ENCODE measurements at regions of chr7 and their contacts with region 1.

Region 1: DNA sequence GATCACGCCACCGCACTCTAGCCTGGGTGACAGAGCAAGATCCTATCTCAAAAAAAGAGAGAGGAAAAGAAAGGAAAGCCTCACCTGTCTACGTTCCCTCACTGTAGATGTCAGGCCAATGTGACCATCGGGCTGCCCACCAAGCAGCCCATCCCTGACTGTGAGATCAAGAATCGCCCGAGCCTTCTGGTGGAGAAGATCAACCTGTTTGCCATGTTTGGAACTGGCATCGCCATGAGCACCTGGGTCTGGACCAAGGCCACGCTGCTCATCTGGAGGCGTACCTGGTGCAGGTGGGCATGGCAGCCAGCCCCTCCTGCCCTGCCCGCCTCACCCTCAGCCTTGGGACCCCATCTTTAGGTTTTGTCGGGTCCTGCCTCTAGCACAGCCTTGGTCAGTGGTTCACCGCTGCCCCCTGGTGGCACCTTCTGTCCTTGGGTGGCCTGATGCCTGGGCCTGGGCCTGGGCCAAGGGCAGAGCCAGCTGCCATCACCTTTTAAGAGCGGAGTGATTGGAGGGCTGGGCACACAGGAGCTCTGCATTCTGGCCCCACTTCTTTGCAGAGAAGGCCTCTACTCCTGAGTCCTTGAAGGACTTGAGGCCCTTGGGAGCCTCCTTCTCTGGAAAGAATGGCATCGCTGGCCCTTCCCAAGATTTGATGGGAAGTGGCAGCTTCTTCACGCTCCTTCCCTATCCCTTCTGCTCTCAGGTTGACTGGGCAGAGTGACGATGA is 14.4 kb upstream of the AHCYL2 start:
- DNase-seq: peak; percentile 77
- ATAC-seq: peak; percentile 91
- H3K4me3 Mint-ChIP-seq: no peak overlapping the region
- H3K27ac Mint-ChIP-seq: no peak overlapping the region
- H3K4me1 Mint-ChIP-seq: peaks cover 5% of the 10 kb centered on the region
- H3K27me3 Mint-ChIP-seq: no peaks in the 10 kb centered on the region
- CTCF ChIP-seq: peak; percentile 66

Region 2: GRCh38 chr7:128904381-128905197 is 305.8 kb before region 1 on chr7:
- CTCF ChIA-PET with region 1: interaction called, 3 read pairs
- POLR2A ChIA-PET with region 1: no interaction called
- intact Hi-C with region 1: loop called (anchors 1 kb)
- DNase-seq: no peak
- ATAC-seq: peak; percentile 90
- H3K4me3 Mint-ChIP-seq: no peak overlapping the region
- H3K27ac Mint-ChIP-seq: no peak overlapping the region
- H3K4me1 Mint-ChIP-seq: peaks cover 8% of the 10 kb centered on the region
- H3K27me3 Mint-ChIP-seq: peaks cover 7% of the 10 kb centered on the region
- CTCF ChIP-seq: no peak

Region 3: GRCh38 chr7:129163875-129164544 is 46.4 kb before region 1 on chr7:
- CTCF ChIA-PET with region 1: interaction called, 27 read pairs
- POLR2A ChIA-PET with region 1: interaction called, 4 read pairs
- intact Hi-C with region 1: loop called (anchors 1 kb)
- DNase-seq: no peak
- ATAC-seq: no peak
- H3K4me3 Mint-ChIP-seq: no peak overlapping the region
- H3K27ac Mint-ChIP-seq: peak overlapping the region; percentile 59
- H3K4me1 Mint-ChIP-seq: peaks cover 89% of the 10 kb centered on the region
- H3K27me3 Mint-ChIP-seq: no peaks in the 10 kb centered on the region
- CTCF ChIP-seq: peak; percentile 62

Region 4: GRCh38 chr7:129188372-129188891 is 22.0 kb before region 1 on chr7 and contains the start of gene SMO:
- CTCF ChIA-PET with region 1: no interaction called
- POLR2A ChIA-PET with region 1: no interaction called
- intact Hi-C with region 1: loop called (anchors 2 kb)
- DNase-seq: peak; percentile 40
- ATAC-seq: peak; percentile 60
- H3K4me3 Mint-ChIP-seq: peak within 1 kb of the TSS; percentile 85
- H3K27ac Mint-ChIP-seq: no peak within 1 kb of the TSS
- H3K4me1 Mint-ChIP-seq: peaks cover 22% of the 10 kb centered on the region
- H3K27me3 Mint-ChIP-seq: peaks cover 23% of the 10 kb centered on the region
- CTCF ChIP-seq: no peak
- total RNA-seq, gene SMO: 0.66 and 1.8 TPM in 2 replicates

Region 5: GRCh38 chr7:129969807-129970446 is 759.5 kb after region 1 on chr7:
- CTCF ChIA-PET with region 1: no interaction called
- POLR2A ChIA-PET with region 1: no interaction called
- intact Hi-C with region 1: no loop called
- DNase-seq: no peak
- ATAC-seq: no peak
- H3K4me3 Mint-ChIP-seq: no peak overlapping the region
- H3K27ac Mint-ChIP-seq: no peak overlapping the region
- H3K4me1 Mint-ChIP-seq: no peaks in the 10 kb centered on the region
- H3K27me3 Mint-ChIP-seq: peaks cover 1% of the 10 kb centered on the region
- CTCF ChIP-seq: no peak

Measured in activated B cell treated with CpG ODN at 0.5 μM for 24 hours (primary cell).